IMR-90 (cell line): ENCODE measurements at regions of chr6 and their contacts with region 1.

Region 1: GRCh38 chr6:159104163-159104925 is 59.6 kb upstream of the TAGAP start:
- DNase-seq: peak; percentile 45
- ATAC-seq: peak; percentile 99
- H3K4me3 ChIP-seq: no peak overlapping the region
- H3K27ac ChIP-seq: no peak overlapping the region
- H3K4me1 ChIP-seq: no peaks in the 10 kb centered on the region
- H3K27me3 ChIP-seq: peaks cover 30% of the 10 kb centered on the region
- CTCF ChIP-seq: peak; percentile 86
- POLR2A ChIP-seq: no peak
- RAD21 ChIP-seq: peak; percentile 82

Region 2: DNA sequence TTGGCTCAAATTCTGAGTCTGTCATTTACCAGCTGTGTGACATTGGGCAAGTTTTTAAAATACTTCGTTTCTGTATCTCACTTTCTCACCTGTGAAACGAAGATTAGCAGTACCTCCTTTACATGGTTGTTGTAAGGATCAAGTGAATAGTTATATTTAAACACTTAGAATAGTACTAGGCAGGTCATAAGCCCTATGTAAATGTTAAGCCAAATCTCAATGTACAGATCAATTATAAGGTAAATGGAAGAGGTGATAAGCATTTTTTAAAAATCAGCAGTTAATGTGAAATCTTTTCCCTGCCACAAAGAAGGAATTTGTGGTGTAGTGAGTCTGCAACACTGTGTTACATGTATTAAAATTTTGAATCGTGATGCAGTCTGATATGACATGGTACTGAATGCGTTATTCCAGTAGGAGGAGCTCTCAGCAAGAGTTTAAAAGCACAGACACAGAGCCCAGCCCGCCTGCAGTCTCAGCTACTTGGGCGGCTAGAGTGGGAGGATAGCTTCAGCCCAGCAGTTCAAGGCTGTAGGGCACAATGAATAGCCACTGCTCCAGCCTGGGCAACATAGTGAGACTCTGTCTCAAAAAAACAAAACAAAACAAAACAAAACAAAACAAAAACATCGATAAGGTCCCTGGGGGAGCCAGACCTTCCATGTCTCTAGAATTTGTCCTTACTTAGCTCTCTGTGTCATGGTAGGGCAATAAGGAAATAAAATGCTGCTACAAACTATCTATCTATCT is 890.2 kb before region 1 on chr6:
- CTCF ChIA-PET with region 1: no interaction called
- POLR2A ChIA-PET with region 1: no interaction called
- dilution Hi-C with region 1: no loop called
- in situ Hi-C with region 1: loop called (anchors 25 kb)
- intact Hi-C with region 1: no loop called
- DNase-seq: peak; percentile 83
- ATAC-seq: peak; percentile 99
- H3K4me3 ChIP-seq: no peak overlapping the region
- H3K27ac ChIP-seq: no peak overlapping the region
- H3K4me1 ChIP-seq: peaks cover 2% of the 10 kb centered on the region
- H3K27me3 ChIP-seq: no peaks in the 10 kb centered on the region
- CTCF ChIP-seq: peak; percentile 87
- POLR2A ChIP-seq: no peak
- RAD21 ChIP-seq: peak; percentile 86

Region 3: DNA sequence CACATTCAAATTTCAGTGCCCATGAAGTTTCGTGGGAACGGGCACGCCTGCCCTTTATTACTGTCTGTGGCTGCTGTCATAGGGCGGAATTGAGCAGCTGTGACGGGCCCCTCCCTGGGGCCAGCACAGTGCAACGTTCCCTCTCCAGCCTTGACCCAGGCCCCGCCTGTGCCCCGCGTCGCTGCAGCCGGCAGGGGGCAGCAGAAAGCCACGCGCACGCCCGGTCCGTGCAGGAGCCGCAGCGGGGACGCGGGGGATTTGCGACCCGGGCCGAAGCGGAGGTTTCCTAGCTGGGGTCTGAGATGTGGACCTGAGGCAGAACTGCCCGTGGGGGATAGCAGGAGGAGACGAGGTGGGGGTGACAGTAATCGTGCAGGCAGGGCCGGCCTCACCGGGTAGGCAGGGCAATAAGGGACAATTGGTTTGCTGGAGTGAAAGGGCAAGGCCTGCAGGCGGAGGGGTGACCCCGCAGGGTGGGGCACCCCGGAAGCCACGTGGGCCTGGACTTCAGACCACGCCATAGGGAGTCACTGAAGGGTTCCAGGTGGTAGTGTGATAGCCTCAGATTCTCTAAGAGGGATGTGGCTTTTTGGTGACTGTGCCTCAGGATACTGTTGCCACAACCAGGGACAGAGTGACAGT is 400.0 kb before region 1 on chr6:
- CTCF ChIA-PET with region 1: no interaction called
- POLR2A ChIA-PET with region 1: no interaction called
- dilution Hi-C with region 1: no loop called
- in situ Hi-C with region 1: no loop called
- intact Hi-C with region 1: loop called (anchors 1 kb)
- DNase-seq: peak; percentile 28
- ATAC-seq: peak; percentile 94
- H3K4me3 ChIP-seq: peak overlapping the region; percentile 50
- H3K27ac ChIP-seq: no peak overlapping the region
- H3K4me1 ChIP-seq: peaks cover 12% of the 10 kb centered on the region; the same call in 1 of the 2 replicates
- H3K27me3 ChIP-seq: no peaks in the 10 kb centered on the region
- CTCF ChIP-seq: peak; percentile 95
- POLR2A ChIP-seq: no peak
- RAD21 ChIP-seq: peak; percentile 83

Region 4: DNA sequence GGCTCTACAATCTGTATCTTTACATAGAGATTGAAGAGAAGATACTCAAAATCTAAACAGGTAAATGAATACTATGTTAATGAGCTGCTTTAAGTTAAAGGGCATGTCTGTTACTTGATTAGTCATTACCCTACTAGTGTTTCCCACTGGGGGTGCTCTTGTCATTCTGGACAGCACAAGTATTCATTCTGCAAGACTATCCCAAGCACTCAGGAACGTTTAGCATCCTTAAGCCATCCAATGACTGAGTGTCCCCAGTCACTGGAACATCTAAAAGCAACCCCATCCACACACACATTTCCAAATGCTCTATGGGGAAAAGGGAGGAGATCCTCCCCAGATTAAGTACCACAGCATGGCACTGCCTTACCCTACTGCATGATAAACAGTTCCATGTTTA is 310.9 kb before region 1 on chr6:
- CTCF ChIA-PET with region 1: no interaction called
- POLR2A ChIA-PET with region 1: no interaction called
- dilution Hi-C with region 1: no loop called
- in situ Hi-C with region 1: no loop called
- intact Hi-C with region 1: loop called (anchors 10 kb)
- DNase-seq: peak; percentile 65
- ATAC-seq: peak; percentile 80
- H3K4me3 ChIP-seq: no peak overlapping the region
- H3K27ac ChIP-seq: no peak overlapping the region
- H3K4me1 ChIP-seq: peaks cover 2% of the 10 kb centered on the region; the same call in 1 of the 2 replicates
- H3K27me3 ChIP-seq: no peaks in the 10 kb centered on the region
- CTCF ChIP-seq: peak; percentile 62
- POLR2A ChIP-seq: no peak
- RAD21 ChIP-seq: peak; percentile 79

Region 5: GRCh38 chr6:159008656-159009288 is 95.6 kb before region 1 on chr6:
- CTCF ChIA-PET with region 1: interaction called, 3 read pairs
- POLR2A ChIA-PET with region 1: no interaction called
- dilution Hi-C with region 1: no loop called
- in situ Hi-C with region 1: no loop called
- intact Hi-C with region 1: loop called (anchors 1 kb)
- DNase-seq: peak; percentile 28
- ATAC-seq: peak; percentile 44; the same call in 1 of the 2 replicates
- H3K4me3 ChIP-seq: no peak overlapping the region
- H3K27ac ChIP-seq: no peak overlapping the region
- H3K4me1 ChIP-seq: no peaks in the 10 kb centered on the region
- H3K27me3 ChIP-seq: no peaks in the 10 kb centered on the region; the same call in 1 of the 2 replicates
- CTCF ChIP-seq: peak; percentile 42
- POLR2A ChIP-seq: no peak
- RAD21 ChIP-seq: peak; percentile 36

Region 6: GRCh38 chr6:159042003-159042825 is 62.1 kb before region 1 on chr6:
- CTCF ChIA-PET with region 1: interaction called, 11 read pairs
- POLR2A ChIA-PET with region 1: no interaction called
- dilution Hi-C with region 1: no loop called
- in situ Hi-C with region 1: no loop called
- intact Hi-C with region 1: loop called (anchors 1 kb)
- DNase-seq: peak; percentile 47
- ATAC-seq: peak; percentile 67
- H3K4me3 ChIP-seq: no peak overlapping the region
- H3K27ac ChIP-seq: no peak overlapping the region
- H3K4me1 ChIP-seq: no peaks in the 10 kb centered on the region
- H3K27me3 ChIP-seq: peaks cover 50% of the 10 kb centered on the region
- CTCF ChIP-seq: peak; percentile 79
- POLR2A ChIP-seq: no peak
- RAD21 ChIP-seq: peak; percentile 57